Left colon (tissue), 2 donors: ENCODE measurements at regions of chr5 and their contacts with region 1.

Region 1: DNA sequence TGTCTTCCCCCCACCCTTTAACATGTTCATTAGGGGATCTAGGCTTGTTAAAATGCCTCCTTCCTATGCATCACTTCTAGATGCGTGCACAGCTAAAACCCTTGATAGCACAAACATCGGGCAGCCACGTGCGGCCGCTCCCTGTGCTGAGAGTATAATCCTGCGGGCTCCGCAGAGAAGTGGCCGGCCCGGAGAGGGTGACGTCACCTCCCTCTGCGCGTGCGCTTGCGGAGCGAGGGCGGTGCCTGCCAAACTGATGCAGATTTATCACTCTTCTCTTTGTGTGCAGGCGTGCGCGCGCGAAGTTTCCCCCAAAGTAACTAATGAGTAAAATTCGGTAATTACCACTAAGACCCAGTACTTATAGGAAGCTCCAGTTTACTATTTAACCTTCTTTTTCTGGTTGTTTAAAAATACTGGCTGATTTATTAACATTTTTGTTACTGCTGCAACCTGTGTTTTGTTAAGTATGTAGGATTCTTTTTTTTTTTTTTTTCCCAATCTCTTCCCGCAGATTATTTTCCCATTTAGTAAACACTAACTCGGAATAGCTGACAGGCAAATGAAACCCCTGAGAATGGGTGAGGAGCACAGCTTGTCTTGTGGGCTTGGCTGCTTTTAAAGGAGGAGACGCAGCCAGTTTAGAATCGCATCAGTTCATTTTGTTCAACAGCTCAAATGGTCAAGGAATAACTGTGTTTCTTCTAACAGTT is 121.6 kb downstream of the TRIO start:
- DNase-seq: peak; percentile 93 to 95
- ATAC-seq: peak; percentile 99

Region 2: GRCh38 chr5:13354611-13355010 is 910.1 kb before region 1 on chr5:
- intact Hi-C with region 1: no loop called
- DNase-seq: no peak
- ATAC-seq: no peak

Region 3: GRCh38 chr5:14142827-14143548 is 121.8 kb before region 1 on chr5 and contains the start of gene TRIO:
- intact Hi-C with region 1: loop called in 1 of 2 experiments (anchors 10 kb)
- DNase-seq: peak; percentile 92 to 95
- ATAC-seq: peak; percentile 70
- total RNA-seq, gene TRIO: 140 to 181 TPM